ENCODE measurements at regions of chr1 and their contacts with region 1.

Region 1: GRCh38 chr1:64251971-64252370 is 48.5 kb downstream of the UBE2U start:
- DNase-seq: no peak
- H3K4me3 ChIP-seq: no peak overlapping the region
- H3K27ac ChIP-seq: no peak overlapping the region
- H3K4me1 ChIP-seq: no peaks in the 10 kb centered on the region
- H3K27me3 ChIP-seq: no peaks in the 10 kb centered on the region
- CTCF ChIP-seq: peak in 1 of 2 donors; percentile 25

Region 2: DNA sequence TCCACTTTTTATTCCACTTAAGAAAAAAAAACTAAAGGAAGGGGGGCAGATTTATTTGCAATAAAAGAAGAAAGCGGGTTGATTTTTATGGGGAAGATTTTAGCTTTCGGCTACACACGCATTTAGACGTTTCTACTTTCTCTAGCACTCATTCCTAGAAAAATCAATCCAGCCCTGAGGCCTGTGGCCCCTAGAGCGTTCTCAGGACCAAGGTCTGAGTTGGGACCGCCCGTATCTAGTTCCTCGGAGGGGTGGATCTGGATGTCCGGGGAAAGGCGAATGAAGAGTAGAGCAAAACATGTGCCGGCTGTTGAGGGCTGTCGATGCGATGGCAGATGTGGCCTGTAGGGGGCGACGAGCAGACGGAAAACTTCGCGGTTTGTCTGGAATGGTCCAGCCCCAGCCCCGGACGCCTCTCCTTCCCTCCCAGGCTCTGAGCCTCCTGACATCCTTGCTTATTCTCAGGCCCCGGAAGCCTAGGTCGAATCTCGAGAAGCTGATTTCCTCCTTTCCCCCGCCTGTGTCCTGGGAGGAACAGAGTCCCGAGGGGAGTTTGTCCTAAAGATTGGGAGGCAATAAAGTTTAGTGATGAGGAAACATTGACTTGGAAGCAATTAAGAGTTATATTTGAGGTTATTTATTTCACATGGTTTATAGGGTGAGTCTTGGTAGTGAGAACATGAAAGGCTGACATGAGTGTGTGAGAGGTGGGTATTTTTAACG is 924.4 kb before region 1 on chr1:
- CTCF ChIA-PET with region 1: no interaction called
- dilution Hi-C with region 1: no loop called
- in situ Hi-C with region 1: no loop called
- intact Hi-C with region 1: loop called (anchors 5 kb)
- DNase-seq: peak; percentile 32
- H3K4me3 ChIP-seq: no peak overlapping the region
- H3K27ac ChIP-seq: no peak overlapping the region
- H3K4me1 ChIP-seq: peaks cover 10% of the 10 kb centered on the region
- H3K27me3 ChIP-seq: peaks cover 73% of the 10 kb centered on the region
- CTCF ChIP-seq: peak; percentile 60 to 73